ENCODE measurements at regions of chr6 and their contacts with region 1.

Region 1: GRCh38 chr6:111973118-111973761 is 80.7 kb upstream of the CCN6 start:
- DNase-seq: peak; percentile 48 to 93 (median 72)
- ATAC-seq: peak; percentile 92 to 98 (median 96)
- H3K4me3 ChIP-seq: no peak overlapping the region
- H3K4me3 Mint-ChIP-seq: peak overlapping the region; percentile 49 to 66 (median 60)
- H3K27ac ChIP-seq: peak overlapping the region; percentile 86
- H3K27ac Mint-ChIP-seq: peak overlapping the region; percentile 92 to 97
- H3K4me1 ChIP-seq: peaks cover 41 to 71% of the 10 kb centered on the region in 2 experiments
- H3K4me1 Mint-ChIP-seq: peaks cover 69 to 78% (median 76%) of the 10 kb centered on the region in 3 donors
- H3K27me3 ChIP-seq: no peaks in the 10 kb centered on the region
- H3K27me3 Mint-ChIP-seq: no peaks in the 10 kb centered on the region

Region 2: GRCh38 chr6:111989743-111990142 is 16.5 kb after region 1 on chr6:
- CTCF ChIA-PET with region 1: interaction called in 1 of 2 experiments, 7 read pairs
- POLR2A ChIA-PET with region 1: interaction called, 3 to 12 read pairs
- DNase-seq: peak in 24 of 35 experiments; percentile 23 to 73 (median 43)
- ATAC-seq: peak; percentile 84 to 88 (median 84)
- H3K4me3 ChIP-seq: no peak overlapping the region
- H3K4me3 Mint-ChIP-seq: peak overlapping the region; percentile 3 to 49 (median 4)
- H3K27ac ChIP-seq: peak overlapping the region; percentile 90
- H3K27ac Mint-ChIP-seq: peak overlapping the region; percentile 91 to 92
- H3K4me1 ChIP-seq: peaks cover 71 to 87% of the 10 kb centered on the region in 2 experiments
- H3K4me1 Mint-ChIP-seq: peaks cover 96 to 97% (median 96%) of the 10 kb centered on the region in 3 donors
- H3K27me3 ChIP-seq: no peaks in the 10 kb centered on the region
- H3K27me3 Mint-ChIP-seq: no peaks in the 10 kb centered on the region

Region 3: DNA sequence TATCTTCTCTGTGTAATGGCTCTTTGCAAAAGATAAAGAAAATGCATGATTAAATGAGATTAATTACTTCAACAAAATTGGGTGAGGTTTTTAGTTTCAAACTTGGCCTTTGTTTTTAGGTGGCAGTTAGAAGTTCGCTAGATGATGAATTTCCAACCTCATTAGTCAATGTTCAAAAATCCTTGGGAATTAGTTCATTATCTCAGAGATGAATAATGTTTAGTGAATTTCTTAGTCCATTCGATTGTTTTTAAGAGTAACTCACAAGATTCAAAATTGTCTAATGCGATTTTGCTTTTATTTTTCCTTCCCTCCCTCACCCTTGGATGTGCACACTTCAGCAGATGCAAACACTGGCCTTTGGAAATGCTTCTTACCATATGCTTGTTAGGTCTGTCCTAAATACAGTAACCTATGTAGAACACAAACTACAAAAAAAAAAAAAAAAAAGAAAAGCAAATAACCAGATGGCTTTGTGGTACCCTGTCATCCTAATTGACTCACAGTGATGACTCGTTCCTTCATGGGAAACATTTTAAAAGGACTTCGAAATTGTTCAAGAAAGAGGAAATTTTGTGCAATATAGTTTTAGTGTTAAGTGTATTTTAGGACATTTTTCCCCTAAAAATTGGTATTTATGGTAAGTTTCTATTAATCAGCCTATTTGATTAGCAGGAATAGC is 180.8 kb after region 1 on chr6:
- CTCF ChIA-PET with region 1: no interaction called
- POLR2A ChIA-PET with region 1: no interaction called
- DNase-seq: no peak
- ATAC-seq: no peak
- H3K4me3 ChIP-seq: no peak overlapping the region
- H3K4me3 Mint-ChIP-seq: no peak overlapping the region
- H3K27ac ChIP-seq: no peak overlapping the region
- H3K27ac Mint-ChIP-seq: no peak overlapping the region
- H3K4me1 ChIP-seq: no peaks in the 10 kb centered on the region
- H3K4me1 Mint-ChIP-seq: peaks cover 0 to 9% (median 0%) of the 10 kb centered on the region in 3 donors
- H3K27me3 ChIP-seq: no peaks in the 10 kb centered on the region
- H3K27me3 Mint-ChIP-seq: peaks cover 5 to 16% of the 10 kb centered on the region in 2 donors

Region 4: GRCh38 chr6:113169484-113169883 is 1196.2 kb after region 1 on chr6:
- CTCF ChIA-PET with region 1: no interaction called
- POLR2A ChIA-PET with region 1: no interaction called
- DNase-seq: no peak
- ATAC-seq: no peak
- H3K4me3 ChIP-seq: no peak overlapping the region
- H3K4me3 Mint-ChIP-seq: no peak overlapping the region
- H3K27ac ChIP-seq: no peak overlapping the region
- H3K27ac Mint-ChIP-seq: no peak overlapping the region
- H3K4me1 ChIP-seq: no peaks in the 10 kb centered on the region
- H3K4me1 Mint-ChIP-seq: no peaks in the 10 kb centered on the region
- H3K27me3 ChIP-seq: no peaks in the 10 kb centered on the region
- H3K27me3 Mint-ChIP-seq: no peaks in the 10 kb centered on the region